ENCODE measurements at regions of chr21 and their contacts with region 1.

Region 1: GRCh38 chr21:42187976-42188653 is 30.8 kb upstream of the ABCG1 start:
- DNase-seq: peak; percentile 96
- H3K4me3 ChIP-seq: peak overlapping the region; percentile 49
- H3K27ac ChIP-seq: peak overlapping the region; percentile 98
- H3K4me1 ChIP-seq: peaks cover 68% of the 10 kb centered on the region
- CTCF ChIP-seq: no peak

Region 2: GRCh38 chr21:42176859-42177258 is 11.3 kb before region 1 on chr21:
- CTCF ChIA-PET with region 1: no interaction called
- POLR2A ChIA-PET with region 1: interaction called, 13 read pairs
- intact Hi-C with region 1: no loop called
- DNase-seq: no peak
- H3K4me3 ChIP-seq: no peak overlapping the region
- H3K27ac ChIP-seq: no peak overlapping the region
- H3K4me1 ChIP-seq: peaks cover 14% of the 10 kb centered on the region
- CTCF ChIP-seq: no peak

Region 3: GRCh38 chr21:42220138-42220701 is 32.1 kb after region 1 on chr21:
- CTCF ChIA-PET with region 1: no interaction called
- POLR2A ChIA-PET with region 1: interaction called, 4 read pairs
- intact Hi-C with region 1: loop called (anchors 2 kb)
- DNase-seq: peak; percentile 89
- H3K4me3 ChIP-seq: peak overlapping the region; percentile 94
- H3K27ac ChIP-seq: peak overlapping the region; percentile 78
- H3K4me1 ChIP-seq: peaks cover 60% of the 10 kb centered on the region
- CTCF ChIP-seq: no peak

Region 4: GRCh38 chr21:42233067-42233961 is 45.2 kb after region 1 on chr21:
- CTCF ChIA-PET with region 1: interaction called, 3 read pairs
- POLR2A ChIA-PET with region 1: interaction called, 28 read pairs
- intact Hi-C with region 1: loop called (anchors 1 kb)
- DNase-seq: peak; percentile 97
- H3K4me3 ChIP-seq: peak overlapping the region; percentile 61
- H3K27ac ChIP-seq: peak overlapping the region; percentile 99
- H3K4me1 ChIP-seq: peaks cover 99% of the 10 kb centered on the region
- CTCF ChIP-seq: peak; percentile 64

Region 5: GRCh38 chr21:42248783-42249597 is 60.9 kb after region 1 on chr21:
- CTCF ChIA-PET with region 1: interaction called, 3 read pairs
- POLR2A ChIA-PET with region 1: interaction called, 12 read pairs
- intact Hi-C with region 1: loop called (anchors 2 kb)
- DNase-seq: peak; percentile 91
- H3K4me3 ChIP-seq: peak overlapping the region; percentile 44
- H3K27ac ChIP-seq: peak overlapping the region; percentile 90
- H3K4me1 ChIP-seq: peaks cover 89% of the 10 kb centered on the region
- CTCF ChIP-seq: no peak